ENCODE measurements at regions of chrX and their contacts with region 1.

Region 1: GRCh38 chrX:77788050-77788449 is 2.0 kb upstream of the ATRX start:
- DNase-seq: no peak
- H3K4me3 ChIP-seq: no peak overlapping the region
- H3K27ac ChIP-seq: no peak overlapping the region
- H3K27me3 ChIP-seq: no peaks in the 10 kb centered on the region
- CTCF ChIP-seq: no peak

Region 2: DNA sequence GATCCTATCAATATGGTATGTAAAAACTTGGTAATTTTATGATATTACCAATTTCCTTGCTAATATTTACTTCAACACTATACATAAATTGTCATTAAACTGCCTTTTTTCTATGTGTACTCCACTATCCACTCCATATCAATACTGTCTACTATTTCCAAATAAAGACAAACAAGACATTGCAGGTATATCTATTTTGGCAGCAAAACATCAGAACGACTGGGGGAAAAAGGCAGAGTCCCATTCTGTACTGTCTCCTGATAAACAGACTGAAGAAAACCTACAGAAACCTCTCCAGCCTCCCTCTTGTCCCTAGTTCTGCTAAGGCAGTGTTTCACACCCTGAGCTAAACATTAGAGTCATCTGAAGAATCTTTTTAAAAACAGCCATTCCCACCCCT is 98.7 kb before region 1 on chrX:
- CTCF ChIA-PET with region 1: no interaction called
- POLR2A ChIA-PET with region 1: no interaction called
- DNase-seq: no peak
- H3K4me3 ChIP-seq: no peak overlapping the region
- H3K27ac ChIP-seq: no peak overlapping the region
- H3K27me3 ChIP-seq: no peaks in the 10 kb centered on the region
- CTCF ChIP-seq: no peak

Region 3: GRCh38 chrX:77749695-77750094 is 38.4 kb before region 1 on chrX:
- CTCF ChIA-PET with region 1: interaction called, 10 read pairs
- POLR2A ChIA-PET with region 1: no interaction called
- DNase-seq: no peak
- H3K4me3 ChIP-seq: no peak overlapping the region
- H3K27ac ChIP-seq: no peak overlapping the region
- H3K27me3 ChIP-seq: no peaks in the 10 kb centered on the region
- CTCF ChIP-seq: no peak